T-cell (primary cell): ENCODE measurements at regions of chr10 and their contacts with region 1.

Region 1: DNA sequence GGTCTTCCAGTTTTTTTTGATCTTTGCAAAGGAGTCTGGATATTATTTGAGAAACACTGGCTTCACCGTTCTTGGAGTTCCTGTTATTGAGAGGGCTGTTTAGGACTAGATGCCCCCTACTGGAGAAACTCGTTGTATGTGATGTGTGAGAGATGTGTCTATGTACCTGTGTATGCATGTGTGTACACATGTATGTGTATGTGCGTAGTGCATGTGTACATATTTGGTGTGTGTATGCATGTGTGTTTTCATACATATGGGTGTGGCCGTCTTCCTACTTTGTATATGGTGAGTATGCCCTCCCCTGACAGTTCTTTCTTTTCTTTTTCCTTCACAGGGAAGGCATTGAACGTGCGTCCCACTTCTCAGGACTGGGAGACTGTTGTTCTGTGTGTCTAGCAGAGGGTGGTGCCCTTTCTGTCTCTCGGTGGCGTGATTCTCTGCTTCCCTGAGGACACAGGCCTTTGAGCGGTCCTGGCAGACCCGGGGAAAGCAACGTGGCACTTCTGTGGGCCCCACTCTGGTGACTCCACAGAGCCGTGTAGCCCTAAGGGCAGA is 3.0 kb upstream of the CALHM3 start:
- DNase-seq: peak in 11 of 35 experiments; percentile 18 to 84 (median 38)
- ATAC-seq: peak in 3 of 4 experiments; percentile 77 to 84 (median 83)
- H3K4me3 ChIP-seq: no peak overlapping the region
- H3K4me3 Mint-ChIP-seq: no peak overlapping the region
- H3K27ac ChIP-seq: no peak overlapping the region
- H3K27ac Mint-ChIP-seq: peak overlapping the region in 1 of 2 donors; percentile 26
- H3K4me1 ChIP-seq: peaks cover 0 to 3% of the 10 kb centered on the region in 2 experiments
- H3K4me1 Mint-ChIP-seq: peaks cover 2 to 7% (median 4%) of the 10 kb centered on the region in 3 donors
- H3K27me3 ChIP-seq: peaks cover 0 to 5% of the 10 kb centered on the region in 2 experiments
- H3K27me3 Mint-ChIP-seq: no peaks in the 10 kb centered on the region

Region 2: GRCh38 chr10:101736666-101737065 is 1745.4 kb before region 1 on chr10:
- CTCF ChIA-PET with region 1: interaction called in 1 of 2 experiments, 10 read pairs
- POLR2A ChIA-PET with region 1: no interaction called
- DNase-seq: no peak
- ATAC-seq: no peak
- H3K4me3 ChIP-seq: no peak overlapping the region
- H3K4me3 Mint-ChIP-seq: no peak overlapping the region
- H3K27ac ChIP-seq: no peak overlapping the region
- H3K27ac Mint-ChIP-seq: no peak overlapping the region
- H3K4me1 ChIP-seq: no peaks in the 10 kb centered on the region
- H3K4me1 Mint-ChIP-seq: no peaks in the 10 kb centered on the region
- H3K27me3 ChIP-seq: peaks cover 2 to 25% of the 10 kb centered on the region in 2 experiments
- H3K27me3 Mint-ChIP-seq: peaks cover 27 to 33% of the 10 kb centered on the region in 2 donors

Region 3: DNA sequence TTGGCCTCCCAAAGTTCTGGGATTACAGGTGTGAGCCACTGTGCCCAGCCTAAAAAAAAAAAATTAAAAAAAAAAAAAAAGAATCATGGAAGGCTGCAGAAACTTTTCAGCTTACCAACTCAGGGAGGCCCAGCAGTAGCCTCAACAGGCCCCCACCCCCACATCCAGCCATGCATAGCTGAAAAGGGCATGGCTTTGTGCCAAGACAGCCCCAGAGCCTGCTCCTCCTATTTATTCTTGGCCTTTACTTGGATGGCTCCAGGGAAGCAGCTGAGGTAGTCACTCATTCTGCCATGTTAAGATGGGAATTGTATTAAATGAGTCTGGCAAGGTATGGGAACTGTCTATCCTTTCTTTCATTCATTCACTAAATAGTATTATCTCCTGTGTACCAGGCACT is 577.7 kb before region 1 on chr10:
- CTCF ChIA-PET with region 1: interaction called in 1 of 2 experiments, 13 read pairs
- POLR2A ChIA-PET with region 1: no interaction called
- DNase-seq: no peak
- ATAC-seq: no peak
- H3K4me3 ChIP-seq: no peak overlapping the region
- H3K4me3 Mint-ChIP-seq: no peak overlapping the region
- H3K27ac ChIP-seq: no peak overlapping the region
- H3K27ac Mint-ChIP-seq: no peak overlapping the region
- H3K4me1 ChIP-seq: no peaks in the 10 kb centered on the region
- H3K4me1 Mint-ChIP-seq: no peaks in the 10 kb centered on the region
- H3K27me3 ChIP-seq: no peaks in the 10 kb centered on the region
- H3K27me3 Mint-ChIP-seq: no peaks in the 10 kb centered on the region

Region 4: DNA sequence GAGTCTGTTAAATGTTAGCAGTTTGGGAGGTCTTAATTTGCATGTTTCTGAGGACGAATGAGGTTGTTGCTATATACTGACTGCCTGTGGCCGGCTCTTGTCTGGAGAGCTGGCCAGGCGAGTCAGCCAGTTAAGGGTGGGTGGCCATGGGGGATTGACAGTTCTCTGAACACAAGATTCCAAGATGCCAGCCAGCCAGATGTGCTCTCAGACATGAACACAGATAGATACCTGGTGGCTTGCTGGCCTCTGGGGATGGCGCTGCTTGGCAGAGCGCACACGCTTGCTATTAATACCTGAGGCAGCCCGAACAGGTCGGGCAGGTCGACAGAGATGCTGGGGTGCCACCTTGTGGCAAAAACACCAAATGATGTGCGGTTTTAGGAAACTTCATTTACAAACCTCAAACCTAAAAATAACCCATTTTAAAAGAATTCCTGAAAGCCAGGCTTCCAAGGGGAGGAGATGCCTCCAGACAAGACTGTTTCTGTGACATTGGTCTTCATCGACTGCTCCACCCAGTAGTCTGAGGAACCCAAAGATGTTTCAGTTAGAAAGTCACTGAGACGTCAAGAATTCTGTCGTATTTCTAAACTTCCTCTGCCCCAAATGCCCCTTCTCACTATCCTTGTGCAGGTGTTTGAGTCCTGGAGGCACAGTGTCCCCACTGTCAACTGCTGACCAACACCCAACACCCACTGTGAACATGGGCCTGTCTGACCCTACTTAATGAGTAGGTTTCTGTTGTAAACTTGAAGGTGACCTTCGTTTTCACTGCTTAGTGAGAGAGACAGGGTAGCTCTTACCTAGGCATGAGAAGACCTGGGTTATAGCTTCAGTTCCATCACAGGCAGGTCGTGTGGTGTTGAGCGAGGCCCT is 412.4 kb before region 1 on chr10:
- CTCF ChIA-PET with region 1: no interaction called
- POLR2A ChIA-PET with region 1: interaction called in 1 of 2 experiments, 11 read pairs
- DNase-seq: peak; percentile 43 to 84 (median 69)
- ATAC-seq: peak; percentile 79 to 91 (median 83)
- H3K4me3 ChIP-seq: no peak overlapping the region
- H3K4me3 Mint-ChIP-seq: peak overlapping the region in 1 of 3 donors; percentile 13
- H3K27ac ChIP-seq: peak overlapping the region; percentile 35
- H3K27ac Mint-ChIP-seq: peak overlapping the region; percentile 58 to 79
- H3K4me1 ChIP-seq: peaks cover 17 to 22% of the 10 kb centered on the region in 2 experiments
- H3K4me1 Mint-ChIP-seq: peaks cover 21 to 29% (median 28%) of the 10 kb centered on the region in 3 donors
- H3K27me3 ChIP-seq: no peaks in the 10 kb centered on the region
- H3K27me3 Mint-ChIP-seq: no peaks in the 10 kb centered on the region

Region 5: GRCh38 chr10:103153302-103154197 is 328.5 kb before region 1 on chr10:
- CTCF ChIA-PET with region 1: interaction called in 1 of 2 experiments, 16 read pairs
- POLR2A ChIA-PET with region 1: no interaction called
- DNase-seq: no peak
- ATAC-seq: no peak
- H3K4me3 ChIP-seq: no peak overlapping the region
- H3K4me3 Mint-ChIP-seq: no peak overlapping the region
- H3K27ac ChIP-seq: no peak overlapping the region
- H3K27ac Mint-ChIP-seq: no peak overlapping the region
- H3K4me1 ChIP-seq: no peaks in the 10 kb centered on the region
- H3K4me1 Mint-ChIP-seq: peaks cover 4 to 14% (median 6%) of the 10 kb centered on the region in 3 donors
- H3K27me3 ChIP-seq: no peaks in the 10 kb centered on the region
- H3K27me3 Mint-ChIP-seq: no peaks in the 10 kb centered on the region

Region 6: DNA sequence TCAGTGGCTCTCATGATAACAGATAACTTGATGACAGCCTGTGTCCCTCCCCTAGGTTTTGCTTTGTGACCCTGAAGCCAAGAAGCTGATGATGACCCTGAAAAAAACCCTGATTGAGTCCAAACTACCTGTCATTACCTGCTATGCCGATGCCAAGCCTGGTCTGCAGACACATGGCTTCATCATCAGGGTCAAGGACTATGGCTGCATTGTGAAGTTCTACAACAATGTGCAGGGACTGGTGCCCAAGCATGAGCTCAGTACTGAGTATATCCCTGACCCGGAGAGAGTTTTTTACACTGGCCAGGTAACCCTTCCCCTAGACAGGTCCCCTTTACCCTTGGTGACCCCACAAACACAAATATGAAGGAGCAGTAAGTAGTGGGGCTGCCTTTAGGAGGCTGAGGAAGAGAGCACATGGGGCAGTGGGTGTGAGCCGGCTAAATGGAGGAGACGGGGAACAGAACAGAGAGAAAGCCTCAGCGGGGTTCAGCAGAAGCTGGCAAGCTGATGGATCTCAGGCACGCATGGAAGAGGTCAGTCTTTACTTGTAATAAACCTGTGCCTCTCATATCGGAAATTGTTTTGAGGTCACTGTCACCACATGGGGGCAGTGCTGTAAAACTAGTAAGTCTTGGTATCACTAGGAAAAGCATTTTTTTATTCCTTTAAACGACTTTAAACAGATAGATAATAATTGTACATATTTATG is 65.5 kb before region 1 on chr10:
- CTCF ChIA-PET with region 1: interaction called, 23 to 54 read pairs
- POLR2A ChIA-PET with region 1: interaction called in 1 of 2 experiments, 3 read pairs
- DNase-seq: peak; percentile 18 to 83 (median 53)
- ATAC-seq: peak in 1 of 4 experiments; percentile 46
- H3K4me3 ChIP-seq: no peak overlapping the region
- H3K4me3 Mint-ChIP-seq: no peak overlapping the region
- H3K27ac ChIP-seq: no peak overlapping the region
- H3K27ac Mint-ChIP-seq: no peak overlapping the region
- H3K4me1 ChIP-seq: no peaks in the 10 kb centered on the region
- H3K4me1 Mint-ChIP-seq: no peaks in the 10 kb centered on the region
- H3K27me3 ChIP-seq: no peaks in the 10 kb centered on the region
- H3K27me3 Mint-ChIP-seq: no peaks in the 10 kb centered on the region

Region 7: GRCh38 chr10:103448746-103449145 is 33.3 kb before region 1 on chr10:
- CTCF ChIA-PET with region 1: interaction called, 7 to 12 read pairs
- POLR2A ChIA-PET with region 1: no interaction called
- DNase-seq: no peak
- ATAC-seq: no peak
- H3K4me3 ChIP-seq: no peak overlapping the region
- H3K4me3 Mint-ChIP-seq: peak overlapping the region; percentile 25 to 90 (median 90)
- H3K27ac ChIP-seq: peak overlapping the region; percentile 8
- H3K27ac Mint-ChIP-seq: peak overlapping the region; percentile 88 to 94
- H3K4me1 ChIP-seq: peaks cover 5 to 70% of the 10 kb centered on the region in 2 experiments
- H3K4me1 Mint-ChIP-seq: peaks cover 42 to 57% (median 57%) of the 10 kb centered on the region in 3 donors
- H3K27me3 ChIP-seq: no peaks in the 10 kb centered on the region
- H3K27me3 Mint-ChIP-seq: no peaks in the 10 kb centered on the region